ENCODE measurements at regions of chr2 and their contacts with region 1.

Region 1: GRCh38 chr2:95207111-95207961 is at the start of gene ZNF892:
- DNase-seq: peak; percentile 95 to 96
- H3K4me3 ChIP-seq: peak within 1 kb of the TSS; percentile 61
- H3K4me3 Mint-ChIP-seq: peak within 1 kb of the TSS; percentile 75
- H3K27ac Mint-ChIP-seq: peak within 1 kb of the TSS; percentile 15
- H3K4me1 ChIP-seq: no peaks in the 10 kb centered on the region
- H3K4me1 Mint-ChIP-seq: peaks cover 7% of the 10 kb centered on the region
- H3K27me3 ChIP-seq: no peaks in the 10 kb centered on the region
- H3K27me3 Mint-ChIP-seq: no peaks in the 10 kb centered on the region
- CTCF ChIP-seq: peak; percentile 34 to 62
- total RNA-seq, gene ZNF892: 3.4 and 3.5 TPM in 2 replicates

Region 2: DNA sequence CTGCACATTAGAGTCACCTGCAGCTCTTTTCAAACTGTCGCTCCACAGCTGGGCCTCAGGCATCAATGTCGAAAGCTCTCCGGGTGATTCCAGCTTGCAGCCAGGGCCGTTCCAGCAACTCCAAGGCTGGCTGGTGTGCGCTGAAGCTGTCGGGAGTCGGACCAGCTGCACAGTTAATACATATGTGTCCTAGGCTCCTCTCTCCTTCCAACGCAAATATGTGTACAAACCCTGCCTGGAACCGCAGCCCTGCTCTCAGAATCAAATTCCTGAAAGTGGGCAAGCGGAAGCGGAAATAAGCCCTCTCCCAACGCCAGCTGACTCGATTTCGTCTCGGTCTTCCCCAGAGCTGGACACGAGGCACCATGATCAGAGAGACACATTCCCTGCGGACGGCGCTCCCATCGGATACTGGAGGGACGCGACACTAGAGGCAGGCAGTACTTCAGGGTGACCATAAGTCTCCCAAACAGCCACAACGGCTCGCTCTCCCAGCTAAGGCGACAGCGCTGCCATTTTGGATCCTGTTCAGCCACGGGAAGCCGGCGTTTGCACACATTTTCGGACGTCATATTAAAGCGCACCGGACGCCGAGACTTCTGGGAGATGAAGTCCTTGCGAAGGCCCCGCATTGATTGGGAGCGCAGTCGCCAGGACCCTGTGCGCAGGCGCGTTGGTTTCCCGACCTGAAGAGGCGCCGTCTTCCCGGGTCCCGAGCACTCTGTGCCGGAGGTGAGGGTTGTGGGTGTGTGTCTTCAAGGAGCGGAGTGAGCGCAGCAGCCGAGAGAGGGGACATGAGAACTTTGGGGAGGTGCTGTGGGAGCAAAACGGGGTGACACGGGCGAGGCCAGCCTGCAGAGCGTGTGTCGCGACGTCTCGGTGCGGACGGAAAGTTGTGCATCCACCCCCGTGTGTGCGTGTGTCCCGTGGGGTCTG is 41.9 kb before region 1 on chr2 and contains the start of gene ZNF2:
- CTCF ChIA-PET with region 1: no interaction called
- POLR2A ChIA-PET with region 1: no interaction called
- intact Hi-C with region 1: loop called (anchors 2 kb)
- DNase-seq: peak; percentile 97 to 98
- H3K4me3 ChIP-seq: peak within 1 kb of the TSS; percentile 89
- H3K4me3 Mint-ChIP-seq: peak within 1 kb of the TSS; percentile 95
- H3K27ac Mint-ChIP-seq: peak within 1 kb of the TSS; percentile 97
- H3K4me1 ChIP-seq: 0 out of 2 replicates have a peak, but pooled peaks cover 3% of the 10 kb centered on the region
- H3K4me1 Mint-ChIP-seq: peaks cover 7% of the 10 kb centered on the region
- H3K27me3 ChIP-seq: no peaks in the 10 kb centered on the region
- H3K27me3 Mint-ChIP-seq: no peaks in the 10 kb centered on the region
- CTCF ChIP-seq: no peak
- total RNA-seq, gene ZNF2: 3.8 and 4.2 TPM in 2 replicates